ENCODE measurements at regions of chr17 and their contacts with region 1.

Region 1: DNA sequence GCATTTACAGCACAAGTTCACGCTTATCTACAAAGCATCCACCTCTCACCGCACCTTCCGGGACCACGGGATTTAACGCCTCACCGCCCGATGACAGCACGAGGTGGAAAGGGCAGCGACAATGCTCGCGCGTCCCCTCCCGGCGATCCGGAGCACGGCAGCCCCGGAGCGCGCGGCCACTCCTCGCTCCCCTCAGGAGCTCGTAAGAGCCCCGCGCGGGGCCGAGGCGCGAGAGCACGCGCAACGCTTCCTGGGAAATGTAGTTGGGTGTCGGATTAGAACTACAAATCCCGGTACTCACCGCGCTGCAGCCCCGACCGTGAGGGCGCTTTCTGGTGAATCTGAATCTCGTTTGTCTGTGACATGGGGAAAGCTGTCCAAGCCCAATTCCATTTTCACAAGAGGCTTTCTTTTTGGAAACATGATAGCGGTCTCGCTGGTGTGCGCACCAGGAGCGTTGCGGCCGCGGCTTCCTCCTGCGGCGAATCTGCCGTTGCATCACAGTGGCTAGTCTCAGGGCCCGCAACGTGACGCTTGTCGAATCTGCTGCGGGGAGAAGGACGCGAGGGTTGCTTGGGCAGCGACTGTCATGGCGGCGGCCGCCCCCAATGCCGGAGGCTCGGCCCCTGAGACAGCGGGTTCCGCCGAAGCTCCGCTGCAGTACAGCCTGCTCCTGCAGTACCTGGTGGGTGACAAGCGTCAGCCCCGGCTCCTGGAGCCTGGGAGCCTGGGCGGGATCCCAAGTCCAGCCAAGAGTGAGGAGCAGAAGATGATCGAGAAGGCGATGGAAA is at the start of gene TIMM22:
- DNase-seq: peak; percentile 92 to 95 (median 95)
- ATAC-seq: peak; percentile 93 to 96 (median 95)
- H3K4me3 ChIP-seq: peak within 1 kb of the TSS; percentile 75 to 100 (median 86)
- H3K27ac ChIP-seq: peak within 1 kb of the TSS; percentile 78 to 99 (median 92)
- H3K4me1 ChIP-seq: peaks cover 6 to 48% (median 38%) of the 10 kb centered on the region in 12 donors
- H3K27me3 ChIP-seq: no peaks in the 10 kb centered on the region
- CTCF ChIP-seq: peak; percentile 84 to 98 (median 93)
- POLR2A ChIP-seq: peak; percentile 2 to 59
- total RNA-seq, gene TIMM22: 12.5 to 20.4 (median 16.5) TPM

Region 2: GRCh38 chr17:409848-410545 is 586.8 kb before region 1 on chr17:
- intact Hi-C with region 1: loop called in 1 of 10 experiments (anchors 5 kb)
- DNase-seq: peak; percentile 99 to 100 (median 100)
- ATAC-seq: peak; percentile 92 to 97 (median 92)
- H3K4me3 ChIP-seq: peak overlapping the region; percentile 65 to 100 (median 82)
- H3K27ac ChIP-seq: peak overlapping the region; percentile 19 to 92 (median 76)
- H3K4me1 ChIP-seq: peaks cover 0 to 34% (median 15%) of the 10 kb centered on the region in 12 donors
- H3K27me3 ChIP-seq: no peaks in the 10 kb centered on the region
- CTCF ChIP-seq: no peak
- POLR2A ChIP-seq: peak in 1 of 2 donors; percentile 52

Region 3: DNA sequence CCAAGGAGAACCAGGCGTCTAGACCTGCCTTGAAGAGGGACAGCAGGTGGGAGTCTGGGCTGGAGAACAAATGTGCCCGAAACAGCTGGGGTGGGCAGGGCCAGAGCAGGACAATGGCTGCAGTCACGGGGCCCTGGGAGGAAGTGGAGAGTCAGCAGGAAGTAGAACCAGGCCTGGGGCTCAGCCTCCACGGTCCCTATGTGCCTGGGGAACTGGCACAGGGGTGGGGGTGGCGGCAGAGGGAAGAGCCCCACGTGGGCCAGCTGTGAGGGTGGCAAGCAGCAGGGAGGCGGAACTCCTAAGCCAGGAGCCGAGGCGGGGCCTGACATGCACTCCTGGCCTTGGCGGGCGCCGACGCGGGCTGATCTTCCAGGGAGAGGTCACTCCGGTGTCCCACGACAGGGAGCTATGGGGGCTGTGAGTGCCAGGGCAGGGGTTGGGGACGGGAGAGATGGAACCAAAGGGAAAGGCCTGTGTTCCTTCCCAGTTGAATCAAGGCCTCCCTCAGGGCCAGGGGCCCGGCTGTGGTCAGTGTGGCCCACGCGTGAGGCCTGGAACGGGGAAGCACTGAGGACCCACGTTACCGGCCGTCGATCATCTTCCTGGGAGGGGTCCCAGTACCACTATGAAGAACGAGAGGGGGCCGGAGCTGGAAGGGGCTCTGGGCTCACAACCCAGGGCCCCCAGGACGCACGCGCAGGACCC is 42.9 kb after region 1 on chr17:
- intact Hi-C with region 1: loop called in 3 of 10 experiments (anchors 2 to 5 kb)
- DNase-seq: peak; percentile 83 to 92 (median 90)
- ATAC-seq: peak; percentile 51 to 78 (median 72)
- H3K4me3 ChIP-seq: peak overlapping the region in 9 of 12 donors; percentile 20 to 41 (median 27)
- H3K27ac ChIP-seq: peak overlapping the region; percentile 78 to 96 (median 86)
- H3K4me1 ChIP-seq: peaks cover 7 to 79% (median 51%) of the 10 kb centered on the region in 12 donors
- H3K27me3 ChIP-seq: no peaks in the 10 kb centered on the region
- CTCF ChIP-seq: peak in 1 of 12 donors; percentile 8
- POLR2A ChIP-seq: peak in 1 of 2 donors; percentile 15

Region 4: GRCh38 chr17:1067282-1067956 is 70.7 kb after region 1 on chr17:
- intact Hi-C with region 1: no loop called
- DNase-seq: peak; percentile 48 to 79 (median 60)
- ATAC-seq: peak; percentile 83 to 94 (median 92)
- H3K4me3 ChIP-seq: no peak overlapping the region
- H3K27ac ChIP-seq: peak overlapping the region in 8 of 12 donors; percentile 3 to 73 (median 43)
- H3K4me1 ChIP-seq: peaks cover 0 to 11% (median 0%) of the 10 kb centered on the region in 12 donors
- H3K27me3 ChIP-seq: no peaks in the 10 kb centered on the region
- CTCF ChIP-seq: no peak
- POLR2A ChIP-seq: no peak